IMR-90 (cell line): ENCODE measurements at regions of chr5 and their contacts with region 1.

Region 1: GRCh38 chr5:140145818-140146522 is 20.2 kb downstream of the IGIP start:
- DNase-seq: peak; percentile 66
- ATAC-seq: peak; percentile 96
- H3K4me3 ChIP-seq: peak overlapping the region; percentile 36
- H3K27ac ChIP-seq: no peak overlapping the region
- H3K4me1 ChIP-seq: no peaks in the 10 kb centered on the region; the same call in 1 of the 2 replicates
- H3K27me3 ChIP-seq: no peaks in the 10 kb centered on the region; the same call in 1 of the 2 replicates
- CTCF ChIP-seq: peak; percentile 79
- POLR2A ChIP-seq: no peak
- RAD21 ChIP-seq: peak; percentile 54

Region 2: GRCh38 chr5:139881143-139881733 is 264.7 kb before region 1 on chr5:
- CTCF ChIA-PET with region 1: no interaction called
- POLR2A ChIA-PET with region 1: interaction called, 10 read pairs
- dilution Hi-C with region 1: no loop called
- in situ Hi-C with region 1: no loop called
- intact Hi-C with region 1: no loop called
- DNase-seq: no peak
- ATAC-seq: no peak
- H3K4me3 ChIP-seq: no peak overlapping the region
- H3K27ac ChIP-seq: no peak overlapping the region
- H3K4me1 ChIP-seq: peaks cover 7% of the 10 kb centered on the region; the same call in 1 of the 2 replicates
- H3K27me3 ChIP-seq: peaks cover 77% of the 10 kb centered on the region
- CTCF ChIP-seq: no peak
- POLR2A ChIP-seq: no peak
- RAD21 ChIP-seq: no peak

Region 3: GRCh38 chr5:140073296-140073695 is 72.7 kb before region 1 on chr5:
- CTCF ChIA-PET with region 1: interaction called, 6 read pairs
- POLR2A ChIA-PET with region 1: no interaction called
- dilution Hi-C with region 1: no loop called
- in situ Hi-C with region 1: no loop called
- intact Hi-C with region 1: loop called (anchors 1 kb)
- DNase-seq: peak; percentile 17
- ATAC-seq: no peak
- H3K4me3 ChIP-seq: no peak overlapping the region
- H3K27ac ChIP-seq: no peak overlapping the region
- H3K4me1 ChIP-seq: no peaks in the 10 kb centered on the region
- H3K27me3 ChIP-seq: peaks cover 18% of the 10 kb centered on the region
- CTCF ChIP-seq: peak; percentile 63
- POLR2A ChIP-seq: no peak
- RAD21 ChIP-seq: peak; percentile 65

Region 4: DNA sequence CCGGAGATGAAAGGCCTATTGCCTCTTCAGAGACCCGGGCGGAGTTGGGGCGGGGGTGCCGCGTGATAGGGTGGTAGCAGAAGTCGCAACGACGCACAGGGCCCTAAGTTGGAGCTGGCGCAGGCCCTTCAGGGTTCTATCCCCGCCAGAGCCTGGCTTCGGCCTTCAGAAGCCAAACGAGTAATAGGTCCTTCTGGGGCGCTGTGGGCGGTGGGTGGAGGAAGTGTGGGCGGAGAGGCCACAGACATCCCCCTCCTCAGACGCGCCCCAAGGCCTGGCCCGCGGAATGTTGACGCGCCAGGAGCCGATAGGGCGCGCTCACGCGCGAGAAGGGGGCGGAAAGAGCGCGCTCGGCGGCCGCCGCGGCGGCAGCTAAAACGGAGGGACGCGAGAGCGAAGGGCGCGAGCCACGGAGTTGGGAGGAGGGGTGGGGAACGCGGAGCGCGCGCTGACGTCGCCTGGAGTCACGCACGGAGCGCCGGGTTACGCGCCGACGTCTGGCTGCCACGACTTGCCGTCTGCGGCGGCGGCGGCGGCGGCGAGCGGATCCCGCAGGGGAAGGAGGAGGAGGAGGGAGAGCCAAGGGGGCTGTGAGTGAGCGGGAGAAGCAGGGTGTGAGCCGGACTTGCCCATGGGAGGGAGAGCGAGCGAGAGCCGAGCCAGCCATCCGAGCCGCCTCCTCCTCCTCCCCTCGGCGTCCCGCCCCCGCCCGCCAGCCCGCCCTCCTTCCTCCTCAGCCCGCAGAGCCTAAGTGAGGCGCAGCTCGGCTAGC is 38.5 kb before region 1 on chr5:
- CTCF ChIA-PET with region 1: interaction called, 4 read pairs
- POLR2A ChIA-PET with region 1: no interaction called
- dilution Hi-C with region 1: no loop called
- in situ Hi-C with region 1: no loop called
- intact Hi-C with region 1: loop called (anchors 1 kb)
- DNase-seq: peak; percentile 93
- ATAC-seq: peak; percentile 96
- H3K4me3 ChIP-seq: peak overlapping the region; percentile 74
- H3K27ac ChIP-seq: peak overlapping the region; percentile 97
- H3K4me1 ChIP-seq: peaks cover 7% of the 10 kb centered on the region
- H3K27me3 ChIP-seq: peaks cover 2% of the 10 kb centered on the region
- CTCF ChIP-seq: peak; percentile 29; the same call in 1 of the 2 replicates
- POLR2A ChIP-seq: peak; percentile 69; the same call in 1 of the 2 replicates
- RAD21 ChIP-seq: no peak; the same call in 1 of the 2 replicates

Region 5: GRCh38 chr5:140113699-140114263 is 32.2 kb before region 1 on chr5 and contains the start of gene PURA:
- CTCF ChIA-PET with region 1: interaction called, 31 read pairs
- POLR2A ChIA-PET with region 1: no interaction called
- dilution Hi-C with region 1: no loop called
- in situ Hi-C with region 1: no loop called
- intact Hi-C with region 1: loop called (anchors 1 kb)
- DNase-seq: peak; percentile 92
- ATAC-seq: peak; percentile 91
- H3K4me3 ChIP-seq: peak within 1 kb of the TSS; percentile 87
- H3K27ac ChIP-seq: peak within 1 kb of the TSS; percentile 96
- H3K4me1 ChIP-seq: peaks cover 8% of the 10 kb centered on the region
- H3K27me3 ChIP-seq: no peaks in the 10 kb centered on the region
- CTCF ChIP-seq: no peak
- POLR2A ChIP-seq: peak; percentile 46; the same call in 1 of the 2 replicates
- RAD21 ChIP-seq: no peak
- total RNA-seq, gene PURA: 5.6 and 13.9 TPM in 2 replicates

Region 6: DNA sequence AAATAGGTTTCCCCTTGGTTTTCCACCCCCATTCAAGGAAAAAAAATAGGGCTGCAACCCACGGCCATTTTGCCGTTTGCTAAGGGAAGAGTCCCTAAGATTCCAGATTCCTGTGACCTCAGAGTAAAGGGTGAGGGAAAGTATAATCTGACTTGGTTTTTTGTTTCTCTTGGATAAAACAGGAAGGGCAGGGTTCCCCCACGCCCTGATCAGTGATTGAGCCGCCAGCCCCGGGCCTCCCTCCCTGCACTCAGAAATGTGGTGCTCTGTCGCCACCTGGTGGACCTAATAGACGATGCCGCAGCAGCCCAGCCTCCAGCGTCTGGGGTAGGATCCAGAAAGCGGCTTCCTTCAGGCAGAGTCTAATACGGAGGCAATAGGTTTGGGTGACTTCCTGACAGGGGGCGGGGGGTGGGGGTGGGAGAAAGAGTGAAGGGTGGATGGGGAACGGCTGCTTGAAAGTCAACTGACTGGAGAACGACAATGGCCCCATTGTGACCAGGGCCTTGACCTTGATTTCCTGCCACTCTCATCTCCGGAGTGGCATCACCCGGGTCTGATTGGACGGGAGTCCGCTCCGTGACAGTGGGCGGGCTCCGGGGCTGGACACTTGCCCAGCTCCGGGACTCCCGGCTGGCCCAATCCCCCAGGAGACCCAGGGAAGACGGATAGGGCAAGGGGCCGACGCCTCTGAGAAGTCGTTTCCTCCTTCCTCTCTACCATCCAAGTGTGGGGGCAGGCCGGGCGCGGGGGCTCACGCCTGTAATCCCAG is 11.2 kb after region 1 on chr5:
- CTCF ChIA-PET with region 1: interaction called, 5 read pairs
- POLR2A ChIA-PET with region 1: no interaction called
- dilution Hi-C with region 1: no loop called
- in situ Hi-C with region 1: no loop called
- intact Hi-C with region 1: loop called (anchors 1 kb)
- DNase-seq: peak; percentile 73
- ATAC-seq: peak; percentile 98
- H3K4me3 ChIP-seq: peak overlapping the region; percentile 5; the same call in 1 of the 2 replicates
- H3K27ac ChIP-seq: no peak overlapping the region
- H3K4me1 ChIP-seq: no peaks in the 10 kb centered on the region
- H3K27me3 ChIP-seq: no peaks in the 10 kb centered on the region; the same call in 1 of the 2 replicates
- CTCF ChIP-seq: peak; percentile 97
- POLR2A ChIP-seq: no peak
- RAD21 ChIP-seq: peak; percentile 96